PC-3 (cell line): ENCODE measurements at regions of chrX and their contacts with region 1.

Region 1: DNA sequence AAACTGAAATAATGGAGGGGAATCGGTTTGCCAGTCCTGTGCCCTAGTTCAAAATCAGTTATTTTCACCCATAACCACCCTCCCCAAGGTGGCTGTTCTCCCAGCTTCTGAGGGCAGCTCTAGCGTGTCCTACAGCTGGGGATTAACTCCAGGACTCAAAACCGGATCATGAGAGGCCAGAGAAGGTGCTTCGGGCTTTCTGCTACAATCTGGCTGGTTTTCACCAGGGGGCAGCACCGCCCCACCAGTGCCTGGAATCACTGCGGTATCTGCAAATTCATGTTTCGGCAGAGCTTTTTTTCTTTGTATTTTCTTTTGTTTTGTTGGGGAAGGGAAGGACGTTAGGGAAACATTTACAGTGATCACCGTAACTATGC is 28.4 kb downstream of the PDHA1 start:
- DNase-seq: peak; percentile 78
- ATAC-seq: peak; percentile 82
- H3K4me3 ChIP-seq: peak overlapping the region; percentile 73
- H3K27ac ChIP-seq: peak overlapping the region; percentile 16; the same call in 1 of the 2 replicates
- H3K4me1 ChIP-seq: peaks cover 4% of the 10 kb centered on the region; the same call in 1 of the 2 replicates
- H3K27me3 ChIP-seq: no peaks in the 10 kb centered on the region
- CTCF ChIP-seq: peak; percentile 86

Region 2: DNA sequence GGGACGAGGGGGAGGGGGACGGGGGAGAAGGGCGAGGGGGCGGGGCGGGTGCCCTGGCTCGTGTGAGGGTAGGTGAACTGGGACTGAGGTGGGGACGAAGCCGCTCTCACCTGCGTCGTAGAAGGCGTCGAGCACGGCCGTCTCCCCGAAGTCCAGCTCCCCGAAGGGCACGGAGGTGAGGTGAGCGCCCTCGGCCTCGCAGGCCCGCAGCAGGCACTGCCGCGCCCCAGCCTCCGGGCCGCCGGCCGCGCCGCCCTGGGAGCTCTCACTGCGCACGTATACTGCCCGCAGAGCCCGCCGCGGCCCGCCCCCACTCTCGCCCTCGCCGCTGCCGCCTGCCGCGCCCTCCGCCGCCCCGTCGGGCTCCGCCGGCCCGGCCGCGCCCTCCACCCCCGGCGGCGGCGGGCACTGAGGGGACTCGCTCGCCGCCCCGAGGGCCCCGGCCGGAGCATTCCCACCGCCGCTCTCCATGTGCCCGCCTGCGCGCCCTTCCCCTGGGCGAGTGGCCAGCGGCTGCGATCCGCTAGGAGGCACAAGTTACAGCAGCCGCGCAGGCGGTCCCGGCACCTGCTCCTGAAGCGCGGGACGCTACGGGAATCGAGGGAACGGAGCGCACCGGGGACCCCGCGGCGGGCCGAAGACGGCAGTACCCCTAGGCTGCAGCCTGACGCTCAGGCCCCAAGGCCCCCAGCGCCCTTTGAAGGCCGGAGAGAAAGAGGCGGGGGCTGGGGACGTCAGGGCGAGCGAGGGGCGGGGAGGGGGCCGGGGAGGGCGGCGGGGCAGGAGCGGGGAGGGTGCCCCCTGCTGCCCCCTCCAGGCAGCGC is 142.8 kb after region 1 on chrX and contains the start of gene MAP3K15:
- CTCF ChIA-PET with region 1: no interaction called
- POLR2A ChIA-PET with region 1: no interaction called
- intact Hi-C with region 1: loop called (anchors 5 kb)
- DNase-seq: peak; percentile 50
- ATAC-seq: peak; percentile 75
- H3K4me3 ChIP-seq: peak within 1 kb of the TSS; percentile 68
- H3K27ac ChIP-seq: no peak within 1 kb of the TSS
- H3K4me1 ChIP-seq: no peaks in the 10 kb centered on the region
- H3K27me3 ChIP-seq: no peaks in the 10 kb centered on the region
- CTCF ChIP-seq: no peak; the same call in 1 of the 2 replicates
- total RNA-seq, gene MAP3K15: 3.4 and 4.2 TPM in 2 replicates

Region 3: DNA sequence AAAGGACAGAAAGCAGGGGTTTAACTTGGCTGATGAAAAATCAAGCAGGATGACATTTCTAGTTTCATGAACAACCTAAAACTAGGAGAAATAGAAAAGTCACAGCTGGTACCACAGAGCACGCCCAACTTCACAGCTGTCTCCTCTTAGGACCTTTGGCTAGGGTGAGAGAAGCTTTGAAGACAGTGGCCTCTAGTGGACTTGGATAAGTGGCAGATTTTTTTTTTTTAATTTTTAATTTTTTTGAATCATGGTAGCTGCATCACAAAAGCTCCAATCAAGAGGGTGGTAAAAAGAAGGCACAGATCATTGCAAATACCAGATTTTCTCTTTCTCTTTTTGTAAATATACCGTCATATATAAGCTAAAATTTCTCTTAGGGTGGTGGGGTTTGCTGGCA is 163.3 kb after region 1 on chrX:
- CTCF ChIA-PET with region 1: interaction called, 23 read pairs
- POLR2A ChIA-PET with region 1: no interaction called
- intact Hi-C with region 1: loop called (anchors 1 kb)
- DNase-seq: peak; percentile 43
- ATAC-seq: peak; percentile 42
- H3K4me3 ChIP-seq: no peak overlapping the region
- H3K27ac ChIP-seq: no peak overlapping the region
- H3K4me1 ChIP-seq: no peaks in the 10 kb centered on the region
- H3K27me3 ChIP-seq: no peaks in the 10 kb centered on the region
- CTCF ChIP-seq: peak; percentile 55

Region 4: DNA sequence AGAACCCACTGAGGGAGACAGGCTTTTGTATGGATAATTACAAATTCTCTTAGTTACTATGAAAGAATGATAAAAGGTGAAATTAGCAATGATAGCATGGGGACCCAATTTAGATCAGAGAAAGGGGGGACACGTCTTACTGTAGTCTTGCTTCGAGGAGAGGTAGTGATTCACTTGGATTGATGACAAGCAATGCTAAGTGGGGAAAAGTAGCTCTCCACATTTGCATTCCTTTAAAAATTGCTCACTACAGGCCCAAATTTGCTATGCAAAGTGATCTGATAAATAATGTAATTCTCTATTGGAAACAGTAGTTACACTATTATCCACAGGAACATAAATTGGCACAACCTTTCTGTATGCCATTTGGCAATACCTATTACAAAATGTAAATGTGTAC is 185.7 kb after region 1 on chrX:
- CTCF ChIA-PET with region 1: no interaction called
- POLR2A ChIA-PET with region 1: interaction called, 20 read pairs
- intact Hi-C with region 1: no loop called
- DNase-seq: no peak
- ATAC-seq: no peak
- H3K4me3 ChIP-seq: no peak overlapping the region
- H3K27ac ChIP-seq: no peak overlapping the region
- H3K4me1 ChIP-seq: no peaks in the 10 kb centered on the region
- H3K27me3 ChIP-seq: no peaks in the 10 kb centered on the region
- CTCF ChIP-seq: no peak

Region 5: GRCh38 chrX:19887911-19888879 is 516.0 kb after region 1 on chrX:
- CTCF ChIA-PET with region 1: no interaction called
- POLR2A ChIA-PET with region 1: no interaction called
- intact Hi-C with region 1: loop called (anchors 2 kb)
- DNase-seq: peak; percentile 80
- ATAC-seq: peak; percentile 79
- H3K4me3 ChIP-seq: peak overlapping the region; percentile 73
- H3K27ac ChIP-seq: peak overlapping the region; percentile 77
- H3K4me1 ChIP-seq: peaks cover 30% of the 10 kb centered on the region
- H3K27me3 ChIP-seq: no peaks in the 10 kb centered on the region
- CTCF ChIP-seq: peak; percentile 75